ENCODE measurements at regions of chr9 and their contacts with region 1.

Region 1: DNA sequence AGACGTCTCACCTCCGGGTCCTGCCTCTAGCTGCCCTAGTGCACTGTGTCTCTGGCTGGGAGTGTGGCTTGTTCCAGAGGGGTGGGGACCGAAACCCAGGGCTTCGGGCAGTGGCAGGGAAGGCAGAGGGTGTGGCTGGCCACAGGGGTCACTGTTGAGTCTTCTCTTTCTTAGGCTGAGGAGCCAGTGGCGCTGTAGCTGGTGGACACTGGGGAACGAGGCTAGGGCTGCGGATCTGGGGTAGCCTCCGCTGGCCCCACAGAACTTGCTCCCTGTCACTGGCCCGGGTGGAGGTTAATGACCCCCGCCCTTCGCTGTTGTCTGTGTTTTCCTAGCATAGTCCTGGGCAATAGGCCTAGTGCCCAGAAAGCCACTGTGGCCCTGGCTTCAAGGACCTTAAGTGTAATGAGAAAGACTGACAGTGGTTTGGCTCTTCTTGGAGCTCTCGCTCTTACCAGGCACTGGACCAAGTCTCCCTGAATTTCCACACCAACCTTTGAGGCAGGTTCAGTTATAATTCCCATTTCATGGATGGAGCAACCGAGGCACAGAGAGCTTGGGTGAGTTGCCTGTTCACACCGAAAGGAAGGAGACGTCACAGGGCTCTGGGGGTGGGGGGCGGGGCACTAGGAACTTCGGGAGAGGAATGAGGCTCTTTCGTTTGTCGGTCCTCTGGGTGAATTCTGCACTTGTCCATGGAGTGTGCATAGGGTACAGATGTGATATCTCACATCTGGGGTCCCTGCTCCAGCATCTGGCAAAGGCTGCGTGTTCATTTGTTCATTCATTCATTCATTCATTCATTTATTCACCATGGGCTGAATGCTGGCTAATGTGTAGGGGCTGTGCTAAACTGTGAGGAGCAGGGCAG is 4.8 kb upstream of the IER5L start:
- DNase-seq: no peak
- ATAC-seq: peak; percentile 4
- H3K4me3 ChIP-seq: no peak overlapping the region
- H3K27ac ChIP-seq: no peak overlapping the region
- H3K4me1 ChIP-seq: peaks cover 6% of the 10 kb centered on the region
- H3K27me3 ChIP-seq: no peaks in the 10 kb centered on the region
- CTCF ChIP-seq: peak; percentile 39

Region 2: DNA sequence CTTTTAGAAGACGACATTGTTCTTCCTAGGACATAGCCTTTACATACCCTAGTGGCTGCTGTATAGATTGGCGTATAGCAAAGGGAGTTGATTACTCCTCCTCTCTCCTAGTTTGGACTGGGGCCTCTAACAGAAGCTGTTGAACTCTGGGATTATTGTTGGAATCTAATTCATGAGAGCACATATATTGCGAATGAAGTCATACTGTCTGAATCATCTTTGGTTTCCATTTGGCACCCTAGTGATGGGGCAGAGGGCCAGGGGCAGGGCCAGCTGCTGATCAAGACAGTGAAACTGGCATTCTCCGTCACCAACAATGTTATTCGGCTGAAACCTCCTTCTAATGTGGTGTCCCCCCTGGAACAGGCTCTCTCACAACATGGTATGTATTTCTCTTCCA is 195.1 kb before region 1 on chr9:
- intact Hi-C with region 1: no loop called
- DNase-seq: no peak
- ATAC-seq: no peak
- H3K4me3 ChIP-seq: no peak overlapping the region
- H3K27ac ChIP-seq: no peak overlapping the region
- H3K4me1 ChIP-seq: no peaks in the 10 kb centered on the region
- H3K27me3 ChIP-seq: no peaks in the 10 kb centered on the region
- CTCF ChIP-seq: no peak

Region 3: DNA sequence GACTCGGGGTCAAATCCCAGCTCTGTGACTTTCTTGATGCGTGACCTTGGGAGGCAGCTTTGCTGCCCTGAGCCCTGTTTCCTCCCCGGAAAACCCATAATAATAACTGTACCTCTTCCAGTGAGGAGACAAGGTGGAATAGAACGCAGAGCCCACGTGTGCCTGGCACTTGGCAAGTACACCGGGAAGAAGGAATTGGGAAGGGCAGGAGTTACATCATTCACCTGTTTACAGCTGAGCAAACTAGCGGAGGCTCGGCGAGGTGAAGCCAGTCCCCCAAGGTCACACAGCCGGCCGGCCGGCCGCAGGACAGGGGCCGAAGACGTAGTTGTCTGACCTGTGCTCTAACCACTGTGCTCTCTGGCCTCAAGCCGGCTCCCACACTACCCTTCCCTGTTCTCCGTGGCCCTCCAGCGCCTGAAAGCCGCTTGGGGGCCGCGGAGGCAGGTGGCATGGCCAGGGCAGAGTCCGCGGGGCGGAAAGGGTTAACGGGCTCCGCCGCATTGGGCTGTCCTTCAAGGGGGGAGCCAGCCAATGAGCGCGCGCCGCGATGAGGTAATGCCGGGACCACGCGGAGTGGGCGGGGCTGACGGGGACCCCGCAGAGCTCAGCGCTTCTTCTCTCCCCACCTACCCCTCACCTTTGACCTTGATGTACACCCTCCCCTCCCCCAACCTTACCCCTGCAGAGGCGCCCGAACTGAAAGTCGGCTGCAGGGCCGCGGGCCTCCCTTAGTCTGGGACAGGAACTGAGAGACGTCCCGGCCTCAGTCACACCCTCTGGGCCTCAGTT is 312.9 kb after region 1 on chr9:
- intact Hi-C with region 1: loop called (anchors 10 kb)
- DNase-seq: peak; percentile 97
- ATAC-seq: peak; percentile 85
- H3K4me3 ChIP-seq: peak overlapping the region; percentile 71
- H3K27ac ChIP-seq: peak overlapping the region; percentile 91
- H3K4me1 ChIP-seq: peaks cover 45% of the 10 kb centered on the region
- H3K27me3 ChIP-seq: no peaks in the 10 kb centered on the region
- CTCF ChIP-seq: no peak

Measured in upper lobe of right lung (tissue), 1 donor.